ENCODE measurements at regions of chr7 and their contacts with region 1.

Region 1: GRCh38 chr7:140084972-140085371 is 22.2 kb upstream of the PARP12 start:
- DNase-seq: peak in 1 of 9 donors; percentile 19
- ATAC-seq: peak; percentile 60
- H3K4me3 ChIP-seq: no peak overlapping the region
- H3K4me3 Mint-ChIP-seq: peak overlapping the region in 9 of 10 donors; percentile 0 to 60 (median 44)
- H3K27ac ChIP-seq: peak overlapping the region; percentile 11
- H3K27ac Mint-ChIP-seq: peak overlapping the region; percentile 36 to 90 (median 78)
- H3K4me1 ChIP-seq: peaks cover 0 to 16% of the 10 kb centered on the region in 2 donors
- H3K4me1 Mint-ChIP-seq: peaks cover 23 to 54% (median 31%) of the 10 kb centered on the region in 7 donors
- H3K27me3 ChIP-seq: no peaks in the 10 kb centered on the region
- H3K27me3 Mint-ChIP-seq: no peaks in the 10 kb centered on the region

Region 2: DNA sequence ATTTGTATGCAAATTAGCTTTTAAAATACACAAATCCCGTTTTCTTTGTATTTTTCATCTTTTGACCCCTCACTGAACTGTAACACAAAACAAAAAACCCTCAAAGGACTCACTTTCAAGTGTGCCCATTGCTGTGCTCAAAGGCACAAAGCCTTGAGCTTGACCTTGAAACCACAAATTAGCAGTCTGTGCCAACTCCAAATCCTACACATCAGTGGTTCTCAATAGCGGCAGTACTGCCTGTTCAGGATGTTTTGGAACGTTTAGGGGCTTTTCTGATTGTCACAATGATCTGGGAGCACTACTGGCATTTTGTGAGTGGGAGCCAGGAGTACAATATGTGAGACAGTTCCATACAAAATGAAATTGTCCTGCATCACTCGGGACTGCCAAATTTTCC is 36.4 kb after region 1 on chr7:
- CTCF ChIA-PET with region 1: no interaction called
- POLR2A ChIA-PET with region 1: no interaction called
- intact Hi-C with region 1: loop called in 1 of 2 experiments (anchors 5 kb)
- DNase-seq: no peak
- ATAC-seq: no peak
- H3K4me3 ChIP-seq: no peak overlapping the region
- H3K4me3 Mint-ChIP-seq: no peak overlapping the region
- H3K27ac ChIP-seq: no peak overlapping the region
- H3K27ac Mint-ChIP-seq: peak overlapping the region in 3 of 9 donors; percentile 60 to 74 (median 69)
- H3K4me1 ChIP-seq: no peaks in the 10 kb centered on the region
- H3K4me1 Mint-ChIP-seq: peaks cover 0 to 1% (median 0%) of the 10 kb centered on the region in 7 donors
- H3K27me3 ChIP-seq: no peaks in the 10 kb centered on the region
- H3K27me3 Mint-ChIP-seq: no peaks in the 10 kb centered on the region